ENCODE measurements at regions of chr7 and their contacts with region 1.

Region 1: DNA sequence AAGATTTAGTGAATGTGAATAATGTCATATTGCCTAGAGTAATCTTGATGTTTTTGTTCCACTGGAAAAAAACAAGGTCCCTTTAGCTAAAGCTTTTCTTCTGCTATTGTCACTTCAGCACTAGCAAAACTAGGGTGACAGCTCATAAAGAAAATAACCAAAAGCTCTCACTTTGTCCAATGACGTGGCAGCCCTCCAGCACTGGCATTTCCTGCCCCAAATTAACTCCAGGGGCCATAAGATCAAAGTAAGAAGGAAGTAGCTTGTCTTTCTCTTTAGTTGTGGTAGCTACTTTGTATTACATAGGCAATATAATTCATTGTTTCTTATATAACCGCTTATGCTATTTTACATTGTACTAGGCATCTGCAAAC is 47.3 kb downstream of the LRRN3 start:
- DNase-seq: peak; percentile 61
- H3K4me3 Mint-ChIP-seq: peak overlapping the region; percentile 53
- H3K27ac Mint-ChIP-seq: peak overlapping the region; percentile 96
- H3K4me1 Mint-ChIP-seq: peaks cover 35% of the 10 kb centered on the region
- H3K27me3 Mint-ChIP-seq: peaks cover 4% of the 10 kb centered on the region

Region 2: GRCh38 chr7:110762546-110763225 is 375.5 kb before region 1 on chr7:
- intact Hi-C with region 1: no loop called
- DNase-seq: no peak
- H3K4me3 Mint-ChIP-seq: no peak overlapping the region
- H3K27ac Mint-ChIP-seq: no peak overlapping the region
- H3K4me1 Mint-ChIP-seq: no peaks in the 10 kb centered on the region
- H3K27me3 Mint-ChIP-seq: no peaks in the 10 kb centered on the region

Region 3: GRCh38 chr7:111029574-111030251 is 108.5 kb before region 1 on chr7:
- intact Hi-C with region 1: loop called (anchors 1 kb)
- DNase-seq: no peak
- H3K4me3 Mint-ChIP-seq: peak overlapping the region; percentile 68
- H3K27ac Mint-ChIP-seq: peak overlapping the region; percentile 94
- H3K4me1 Mint-ChIP-seq: peaks cover 64% of the 10 kb centered on the region
- H3K27me3 Mint-ChIP-seq: no peaks in the 10 kb centered on the region

Region 4: DNA sequence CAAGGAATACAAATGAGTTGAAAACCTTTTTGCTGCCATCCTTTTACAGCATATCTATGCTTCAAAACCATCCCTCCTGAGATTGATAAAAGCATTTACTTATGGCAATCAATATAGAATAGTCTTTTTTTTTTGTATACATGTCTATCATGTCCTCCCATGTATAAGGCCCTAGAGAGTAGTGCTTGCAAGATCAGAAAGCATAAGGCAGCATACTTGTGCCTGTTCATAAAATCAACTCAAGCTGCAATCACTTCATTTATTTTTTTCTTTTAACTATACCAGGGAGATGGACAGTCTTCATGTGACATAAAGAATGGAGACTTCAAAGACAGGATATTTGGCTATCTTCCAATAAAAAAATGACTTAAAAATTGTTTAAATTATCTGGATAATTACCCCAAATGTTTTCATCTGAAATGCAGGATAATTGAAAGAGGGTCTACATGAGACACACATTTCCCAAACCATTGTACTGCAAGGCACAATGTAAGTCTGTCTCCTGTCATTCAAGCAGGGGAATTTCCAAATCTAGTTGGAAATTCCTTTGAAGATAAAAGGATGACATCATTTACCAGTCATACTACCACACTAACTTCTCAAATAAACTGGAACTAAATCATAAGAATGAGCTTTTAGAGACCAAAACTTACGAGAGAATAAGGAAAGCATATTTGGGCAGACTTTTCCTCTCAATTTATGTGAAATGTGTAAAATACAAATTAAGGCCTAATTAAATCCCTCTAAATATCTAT is 24.7 kb before region 1 on chr7:
- intact Hi-C with region 1: loop called (anchors 1 kb)
- DNase-seq: no peak
- H3K4me3 Mint-ChIP-seq: peak overlapping the region; percentile 30
- H3K27ac Mint-ChIP-seq: peak overlapping the region; percentile 83
- H3K4me1 Mint-ChIP-seq: peaks cover 43% of the 10 kb centered on the region
- H3K27me3 Mint-ChIP-seq: no peaks in the 10 kb centered on the region

Region 5: DNA sequence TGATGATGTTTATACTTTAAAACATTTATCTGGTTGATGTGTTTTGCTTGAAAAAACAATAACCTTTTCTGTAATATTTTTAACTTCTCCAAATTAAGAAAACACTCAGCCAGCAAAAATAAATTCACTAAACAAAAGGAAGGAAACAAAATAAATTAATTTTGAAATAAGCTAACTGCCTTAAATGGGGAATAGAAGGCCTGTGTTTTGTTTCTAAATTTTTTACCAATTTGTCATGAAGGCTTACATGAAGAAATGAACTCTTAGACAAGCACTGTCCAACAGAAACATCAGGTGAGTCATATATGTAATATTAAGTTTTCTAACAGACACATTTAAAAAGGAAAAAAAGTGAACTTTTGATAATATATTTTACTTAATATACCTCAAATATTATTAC is 21.2 kb after region 1 on chr7:
- intact Hi-C with region 1: loop called (anchors 2 kb)
- DNase-seq: no peak
- H3K4me3 Mint-ChIP-seq: no peak overlapping the region
- H3K27ac Mint-ChIP-seq: no peak overlapping the region
- H3K4me1 Mint-ChIP-seq: no peaks in the 10 kb centered on the region
- H3K27me3 Mint-ChIP-seq: peaks cover 2% of the 10 kb centered on the region

Region 6: GRCh38 chr7:111175908-111176441 is 37.8 kb after region 1 on chr7:
- intact Hi-C with region 1: loop called (anchors 1 kb)
- DNase-seq: no peak
- H3K4me3 Mint-ChIP-seq: no peak overlapping the region
- H3K27ac Mint-ChIP-seq: no peak overlapping the region
- H3K4me1 Mint-ChIP-seq: peaks cover 11% of the 10 kb centered on the region
- H3K27me3 Mint-ChIP-seq: no peaks in the 10 kb centered on the region

Region 7: GRCh38 chr7:111232249-111233084 is 94.3 kb after region 1 on chr7:
- intact Hi-C with region 1: loop called (anchors 1 kb)
- DNase-seq: no peak
- H3K4me3 Mint-ChIP-seq: no peak overlapping the region
- H3K27ac Mint-ChIP-seq: peak overlapping the region; percentile 5
- H3K4me1 Mint-ChIP-seq: peaks cover 9% of the 10 kb centered on the region
- H3K27me3 Mint-ChIP-seq: no peaks in the 10 kb centered on the region

Region 8: DNA sequence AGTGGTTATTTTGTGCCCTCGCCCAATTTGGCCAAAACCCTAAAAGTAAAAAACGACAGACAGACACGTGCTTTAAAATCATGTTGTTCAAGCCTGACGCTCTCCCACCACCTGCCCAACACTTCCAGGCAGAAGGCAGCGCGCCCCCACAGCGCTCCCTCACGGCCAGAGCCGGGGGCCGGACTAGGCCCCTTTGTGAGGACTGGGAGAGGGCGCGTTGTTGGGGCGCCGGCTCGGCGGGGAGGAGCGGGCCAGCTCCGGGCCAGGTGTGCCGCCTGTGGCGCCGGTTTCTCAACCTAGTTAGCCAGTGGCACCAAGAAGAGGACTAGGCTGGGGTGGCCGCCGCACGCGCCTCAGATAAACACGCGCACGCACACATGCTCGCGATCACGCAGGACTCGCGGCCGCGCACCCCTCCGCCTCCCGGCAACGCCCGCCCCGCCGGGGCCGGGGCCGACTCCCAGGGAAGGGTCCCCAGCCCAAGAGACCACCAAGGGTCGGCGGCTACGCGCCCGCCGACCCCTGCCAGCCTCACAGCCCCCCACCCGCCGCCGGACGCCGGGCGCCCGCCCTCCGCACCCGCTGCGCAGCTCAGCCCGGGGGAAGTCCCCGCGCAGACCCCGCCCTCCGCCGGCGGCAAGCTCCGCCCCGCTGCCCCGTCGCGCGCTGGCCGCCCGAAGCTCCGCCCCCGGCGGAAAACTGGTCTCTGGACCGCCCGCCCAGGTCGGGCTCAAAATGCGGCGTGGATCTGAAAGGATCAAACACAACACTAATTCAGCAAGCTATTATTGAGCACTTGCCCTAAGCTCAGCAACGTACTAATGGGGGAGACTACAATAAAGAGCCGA is 423.9 kb after region 1 on chr7 and contains the start of gene IMMP2L:
- intact Hi-C with region 1: loop called (anchors 5 kb)
- DNase-seq: peak; percentile 89
- H3K4me3 Mint-ChIP-seq: peak within 1 kb of the TSS; percentile 87
- H3K27ac Mint-ChIP-seq: peak within 1 kb of the TSS; percentile 89
- H3K4me1 Mint-ChIP-seq: peaks cover 37% of the 10 kb centered on the region
- H3K27me3 Mint-ChIP-seq: no peaks in the 10 kb centered on the region
- total RNA-seq, gene IMMP2L: 11.3 and 16.0 TPM in 2 replicates